ENCODE measurements at regions of chr5 and their contacts with region 1.

Region 1: GRCh38 chr5:160959804-160960203 is 107.8 kb upstream of the ATP10B start:
- DNase-seq: peak; percentile 99
- H3K4me3 Mint-ChIP-seq: no peak overlapping the region
- H3K27ac Mint-ChIP-seq: peak overlapping the region; percentile 69
- H3K4me1 Mint-ChIP-seq: peaks cover 37% of the 10 kb centered on the region
- H3K27me3 Mint-ChIP-seq: no peaks in the 10 kb centered on the region
- CTCF ChIP-seq: no peak

Region 2: GRCh38 chr5:160926428-160926827 is 33.4 kb before region 1 on chr5:
- CTCF ChIA-PET with region 1: no interaction called
- POLR2A ChIA-PET with region 1: no interaction called
- intact Hi-C with region 1: no loop called
- DNase-seq: no peak
- H3K4me3 Mint-ChIP-seq: no peak overlapping the region
- H3K27ac Mint-ChIP-seq: no peak overlapping the region
- H3K4me1 Mint-ChIP-seq: no peaks in the 10 kb centered on the region
- H3K27me3 Mint-ChIP-seq: no peaks in the 10 kb centered on the region
- CTCF ChIP-seq: no peak

Region 3: DNA sequence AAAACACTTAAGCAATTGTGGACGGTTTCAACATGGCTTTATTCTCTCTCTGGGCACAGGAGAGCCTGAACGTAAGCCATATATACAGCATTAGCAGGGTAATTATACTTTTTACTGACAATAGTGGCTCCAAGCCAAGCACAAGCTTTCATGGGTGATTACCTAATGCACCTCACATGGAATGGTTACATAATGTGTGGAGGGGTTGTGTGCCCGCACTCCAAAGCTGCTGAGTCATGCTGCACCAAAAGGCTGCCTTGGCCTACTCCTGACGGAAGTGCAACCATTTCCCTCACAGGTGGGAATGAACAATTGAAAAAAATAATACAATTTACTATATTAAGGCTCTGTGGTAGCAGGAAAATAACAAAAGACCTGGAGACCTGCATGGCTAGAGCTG is 21.3 kb before region 1 on chr5:
- CTCF ChIA-PET with region 1: interaction called, 6 read pairs
- POLR2A ChIA-PET with region 1: interaction called, 27 read pairs
- intact Hi-C with region 1: no loop called
- DNase-seq: peak; percentile 99
- H3K4me3 Mint-ChIP-seq: no peak overlapping the region
- H3K27ac Mint-ChIP-seq: peak overlapping the region; percentile 88
- H3K4me1 Mint-ChIP-seq: peaks cover 13% of the 10 kb centered on the region
- H3K27me3 Mint-ChIP-seq: no peaks in the 10 kb centered on the region
- CTCF ChIP-seq: no peak